ENCODE measurements at regions of chr19 and their contacts with region 1.

Region 1: DNA sequence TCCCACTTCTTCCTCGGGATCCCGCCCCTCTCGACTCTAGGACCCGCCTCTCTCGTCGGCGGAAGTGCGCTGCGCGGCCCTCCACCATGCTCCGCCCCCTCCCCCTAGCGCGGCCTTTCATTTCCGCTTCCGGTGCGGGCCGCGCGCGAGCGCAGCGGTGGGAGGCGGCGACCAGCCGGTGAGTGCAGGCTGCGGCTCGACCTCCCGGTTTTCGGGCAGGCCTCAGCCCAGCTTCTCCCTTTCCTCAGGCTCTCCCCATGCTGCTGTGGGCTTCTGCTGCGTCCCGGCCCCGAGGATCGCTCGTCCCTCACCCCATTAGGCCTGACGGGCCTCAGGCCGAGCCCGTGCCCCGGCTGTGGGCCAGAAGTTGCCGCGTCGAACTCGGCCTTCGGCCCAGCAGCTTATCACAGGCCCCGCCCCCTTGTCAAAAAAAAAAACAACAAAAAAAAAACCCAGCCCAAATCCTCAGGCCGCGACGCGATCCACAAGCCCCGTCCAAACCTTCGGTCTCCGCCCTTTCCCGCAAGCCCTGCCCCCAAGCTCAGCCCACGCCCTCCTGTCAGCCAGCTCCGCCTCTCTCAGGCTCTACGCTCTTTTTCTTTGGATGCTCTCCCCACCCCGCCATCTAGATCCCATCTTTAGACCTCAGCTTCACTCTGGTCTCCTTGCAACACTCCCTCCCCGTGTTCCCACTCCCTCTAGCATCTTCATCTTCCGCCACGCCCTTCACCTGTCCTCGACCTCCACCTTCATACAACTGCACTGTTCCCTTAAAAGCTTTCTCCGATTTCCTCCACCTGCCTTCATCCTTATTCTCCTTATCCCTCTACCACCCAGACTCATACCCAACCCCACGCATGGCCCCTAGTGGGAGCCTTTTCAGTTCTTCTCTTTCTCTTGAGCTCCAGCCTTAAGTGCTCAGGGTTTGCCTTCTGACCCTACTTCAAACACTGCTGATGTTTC is at the start of gene CLASRP:
- DNase-seq: peak; percentile 87
- H3K4me3 Mint-ChIP-seq: peak within 1 kb of the TSS; percentile 93
- H3K27ac Mint-ChIP-seq: peak within 1 kb of the TSS; percentile 95
- H3K4me1 Mint-ChIP-seq: peaks cover 23% of the 10 kb centered on the region
- H3K27me3 Mint-ChIP-seq: no peaks in the 10 kb centered on the region
- total RNA-seq, gene CLASRP: 106 and 116 TPM in 2 replicates

Region 2: DNA sequence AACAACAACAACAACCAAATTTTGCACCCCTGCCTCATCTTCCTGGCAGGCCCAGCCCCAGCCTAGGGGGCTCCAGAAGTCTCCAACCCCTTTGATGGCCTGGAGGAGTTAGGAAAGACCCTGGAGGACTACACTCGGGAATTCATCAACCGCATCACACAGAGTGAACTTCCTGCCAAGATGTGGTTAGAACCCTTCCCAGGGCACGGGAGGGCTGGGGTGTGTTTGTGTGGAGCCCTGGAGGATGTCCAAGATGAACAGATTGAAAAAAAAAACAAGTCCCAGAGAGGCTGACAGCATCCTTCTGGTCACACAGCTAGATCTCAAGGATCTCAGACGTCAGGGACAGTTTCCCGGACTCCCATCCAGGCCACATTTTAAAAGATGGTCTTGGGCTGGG is 111.5 kb before region 1 on chr19:
- intact Hi-C with region 1: loop called (anchors 1 kb)
- DNase-seq: no peak
- H3K4me3 Mint-ChIP-seq: no peak overlapping the region
- H3K27ac Mint-ChIP-seq: no peak overlapping the region
- H3K4me1 Mint-ChIP-seq: peaks cover 5% of the 10 kb centered on the region
- H3K27me3 Mint-ChIP-seq: peaks cover 17% of the 10 kb centered on the region

Region 3: GRCh38 chr19:45001087-45001739 is 38.0 kb before region 1 on chr19 and contains the start of gene RELB:
- intact Hi-C with region 1: loop called (anchors 1 kb)
- DNase-seq: peak; percentile 96
- H3K4me3 Mint-ChIP-seq: peak within 1 kb of the TSS; percentile 91
- H3K27ac Mint-ChIP-seq: peak within 1 kb of the TSS; percentile 97
- H3K4me1 Mint-ChIP-seq: peaks cover 11% of the 10 kb centered on the region
- H3K27me3 Mint-ChIP-seq: no peaks in the 10 kb centered on the region
- total RNA-seq, gene RELB: 73.3 and 77.5 TPM in 2 replicates

Region 4: DNA sequence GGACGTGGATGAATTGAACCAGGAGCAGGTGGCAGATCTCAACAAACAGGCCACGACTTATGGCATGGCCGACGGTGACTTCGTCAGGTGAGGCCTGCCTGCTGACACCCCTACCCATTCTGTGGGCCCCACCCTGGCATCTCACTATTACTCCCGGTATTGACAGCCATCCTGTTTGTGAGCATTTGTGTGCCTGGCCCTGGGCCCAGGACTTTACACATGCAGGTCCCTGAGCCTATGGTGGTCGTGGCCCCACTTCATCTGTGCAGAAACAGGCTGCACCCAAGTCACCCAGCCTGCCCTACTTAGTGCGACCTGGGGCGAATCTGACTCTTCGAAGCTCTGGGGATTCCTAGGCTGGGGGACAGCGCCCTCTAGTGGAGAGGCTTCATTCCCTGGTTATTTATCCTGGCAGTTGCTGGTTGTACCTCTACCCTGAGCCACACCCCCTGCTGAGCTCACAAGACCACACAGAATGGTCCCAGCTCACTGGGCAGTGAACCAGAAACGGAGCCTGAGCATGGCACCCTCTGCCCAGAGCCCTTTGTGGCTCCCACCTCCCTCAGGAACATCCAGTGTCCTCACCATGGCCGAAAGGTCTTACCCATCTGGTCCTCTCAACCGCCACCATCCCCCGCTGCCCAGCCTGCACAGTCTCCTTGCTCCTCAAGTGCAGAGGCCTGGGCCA is 20.2 kb after region 1 on chr19:
- intact Hi-C with region 1: loop called (anchors 1 kb)
- DNase-seq: peak; percentile 73
- H3K4me3 Mint-ChIP-seq: no peak overlapping the region
- H3K27ac Mint-ChIP-seq: peak overlapping the region; percentile 63
- H3K4me1 Mint-ChIP-seq: peaks cover 5% of the 10 kb centered on the region
- H3K27me3 Mint-ChIP-seq: no peaks in the 10 kb centered on the region

Region 5: GRCh38 chr19:45079063-45079910 is 40.1 kb after region 1 on chr19 and contains the start of gene GEMIN7:
- intact Hi-C with region 1: loop called (anchors 1 kb)
- DNase-seq: peak; percentile 76
- H3K4me3 Mint-ChIP-seq: peak within 1 kb of the TSS; percentile 99
- H3K27ac Mint-ChIP-seq: peak within 1 kb of the TSS; percentile 94
- H3K4me1 Mint-ChIP-seq: peaks cover 40% of the 10 kb centered on the region
- H3K27me3 Mint-ChIP-seq: no peaks in the 10 kb centered on the region
- total RNA-seq, gene GEMIN7: 46.8 and 53.6 TPM in 2 replicates

Measured in activated T-helper 1 cell treated with anti-CD3 and anti-CD28 coated beads, Interleukin-12 subunit alpha, Interleukin-12 subunit beta, Interleukin-2, Interleukin-4 antibody, amounts not matched to agents 30 ng/mL and 10 ng/mL and 1 ng/mL, durations not matched to agents 14 hours and 24 hours and 36 hours (primary cell).